Tibial artery (tissue), 4 donors: ENCODE measurements at regions of chr13 and their contacts with region 1.

Region 1: DNA sequence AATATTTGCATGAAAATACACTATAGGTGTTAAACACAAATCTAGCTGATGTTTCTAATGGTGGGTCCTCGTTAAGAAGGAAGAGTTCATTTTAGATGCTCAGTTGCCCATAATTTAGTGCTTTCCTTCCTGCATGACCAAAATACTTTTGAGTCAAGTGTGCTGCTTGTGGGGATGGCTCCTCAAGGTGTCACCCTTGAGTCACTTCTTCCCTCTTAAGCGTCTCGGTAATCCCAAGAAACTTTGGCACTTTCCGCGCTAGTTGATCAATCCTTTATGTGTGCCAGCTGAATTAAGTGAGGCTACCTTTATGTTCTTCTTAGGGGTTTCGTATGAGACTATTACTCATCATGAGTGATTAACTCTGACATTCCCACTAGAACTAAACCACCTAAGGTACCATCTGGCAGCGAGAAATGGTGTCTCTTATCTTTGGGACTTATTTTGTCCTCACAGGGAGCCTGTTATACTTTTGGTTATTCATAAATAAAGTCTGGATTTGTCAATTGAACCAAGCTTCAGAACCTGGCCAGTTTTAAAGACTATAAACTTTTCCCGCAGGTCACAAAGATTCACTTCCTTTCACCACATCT is 106.8 kb downstream of the NHLRC3 start:
- DNase-seq: peak; percentile 60 to 74
- H3K4me3 ChIP-seq: peak overlapping the region; percentile 3 to 29
- H3K27ac ChIP-seq: peak overlapping the region in 1 of 2 donors; percentile 1
- H3K4me1 ChIP-seq: peaks cover 0 to 8% (median 1%) of the 10 kb centered on the region in 4 donors
- H3K27me3 ChIP-seq: no peaks in the 10 kb centered on the region
- CTCF ChIP-seq: peak; percentile 81 to 84

Region 2: GRCh38 chr13:39129213-39129612 is 15.8 kb before region 1 on chr13:
- intact Hi-C with region 1: no loop called
- DNase-seq: no peak
- H3K4me3 ChIP-seq: no peak overlapping the region
- H3K27ac ChIP-seq: no peak overlapping the region
- H3K4me1 ChIP-seq: no peaks in the 10 kb centered on the region
- H3K27me3 ChIP-seq: no peaks in the 10 kb centered on the region
- CTCF ChIP-seq: no peak

Region 3: DNA sequence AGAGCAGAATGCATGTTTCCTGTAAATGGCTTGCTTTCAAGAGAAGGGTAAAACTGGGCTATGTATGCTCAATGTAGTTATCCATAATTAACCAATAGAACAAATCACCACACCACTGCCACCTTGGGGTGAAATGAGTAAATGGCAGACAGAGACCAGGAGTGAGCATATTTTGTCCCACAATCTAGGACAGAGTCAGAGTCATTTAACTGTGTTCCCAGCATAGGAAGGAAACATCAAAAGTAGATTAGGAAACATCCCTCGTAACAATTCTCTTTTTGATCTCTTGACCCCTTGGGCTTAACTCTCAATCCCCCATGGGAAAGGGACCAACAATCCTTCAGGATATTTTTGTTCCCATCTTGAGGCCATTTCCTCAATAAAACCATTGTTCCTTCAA is 118.0 kb after region 1 on chr13:
- intact Hi-C with region 1: loop called (anchors 5 kb)
- DNase-seq: peak in 1 of 2 donors; percentile 59
- H3K4me3 ChIP-seq: no peak overlapping the region
- H3K27ac ChIP-seq: no peak overlapping the region
- H3K4me1 ChIP-seq: peaks cover 0 to 16% (median 3%) of the 10 kb centered on the region in 4 donors
- H3K27me3 ChIP-seq: no peaks in the 10 kb centered on the region
- CTCF ChIP-seq: peak; percentile 67 to 68